Activated CD8-positive, alpha-beta T cell treated with anti-CD3 and anti-CD28 coated beads for 36 hours (primary cell): ENCODE measurements at regions of chr22 and their contacts with region 1.

Region 1: GRCh38 chr22:29625090-29625825 is 21.8 kb downstream of the NF2 start:
- DNase-seq: peak; percentile 69
- ATAC-seq: peak; percentile 61
- H3K4me3 Mint-ChIP-seq: no peak overlapping the region
- H3K27ac Mint-ChIP-seq: peak overlapping the region; percentile 26
- H3K4me1 Mint-ChIP-seq: peaks cover 60% of the 10 kb centered on the region
- H3K27me3 Mint-ChIP-seq: no peaks in the 10 kb centered on the region
- CTCF ChIP-seq: peak; percentile 93

Region 2: DNA sequence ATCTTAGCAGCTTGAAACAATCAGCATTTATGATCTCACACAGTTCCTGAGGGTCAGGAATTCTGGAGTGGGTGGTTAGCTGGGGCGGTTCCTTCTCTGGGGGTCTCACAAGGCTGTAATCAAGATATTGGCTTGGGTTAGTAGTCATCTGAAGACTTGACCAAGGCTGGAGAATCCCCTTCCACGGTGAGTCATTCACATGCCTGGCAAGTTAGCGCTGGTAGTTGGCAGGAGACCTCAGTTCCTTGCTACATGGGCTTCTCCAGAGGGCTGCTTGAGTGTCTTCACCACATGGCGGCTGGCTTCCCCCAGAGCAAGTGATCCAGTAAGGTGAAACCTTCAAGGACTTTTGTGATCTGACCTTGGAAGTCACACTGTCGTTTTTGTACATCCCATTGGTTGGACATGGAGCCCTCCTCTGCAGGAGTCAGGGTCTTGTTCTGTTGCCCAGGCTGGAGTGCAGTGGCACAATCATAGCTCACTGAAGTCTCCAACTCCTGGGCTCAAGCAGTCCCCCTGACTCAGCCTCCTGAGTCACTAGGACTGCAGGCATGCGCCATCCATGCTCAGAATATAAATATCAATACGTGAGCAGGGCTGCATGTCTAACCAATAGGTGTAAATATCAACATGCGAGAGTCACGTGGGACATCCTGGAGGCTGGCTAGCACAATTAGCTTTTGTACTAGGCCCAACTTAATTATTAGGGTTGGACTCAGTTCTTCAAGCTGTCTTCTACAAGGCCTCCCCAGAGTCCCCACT is 37.1 kb before region 1 on chr22:
- CTCF ChIA-PET with region 1: interaction called, 27 read pairs
- POLR2A ChIA-PET with region 1: interaction called, 3 read pairs
- intact Hi-C with region 1: no loop called
- DNase-seq: no peak
- ATAC-seq: no peak
- H3K4me3 Mint-ChIP-seq: no peak overlapping the region
- H3K27ac Mint-ChIP-seq: no peak overlapping the region
- H3K4me1 Mint-ChIP-seq: peaks cover 9% of the 10 kb centered on the region
- H3K27me3 Mint-ChIP-seq: no peaks in the 10 kb centered on the region
- CTCF ChIP-seq: no peak

Region 3: GRCh38 chr22:29610780-29611179 is 14.5 kb before region 1 on chr22:
- CTCF ChIA-PET with region 1: interaction called, 37 read pairs
- POLR2A ChIA-PET with region 1: no interaction called
- intact Hi-C with region 1: no loop called
- DNase-seq: no peak
- ATAC-seq: no peak
- H3K4me3 Mint-ChIP-seq: no peak overlapping the region
- H3K27ac Mint-ChIP-seq: no peak overlapping the region
- H3K4me1 Mint-ChIP-seq: peaks cover 17% of the 10 kb centered on the region
- H3K27me3 Mint-ChIP-seq: no peaks in the 10 kb centered on the region
- CTCF ChIP-seq: no peak

Region 4: DNA sequence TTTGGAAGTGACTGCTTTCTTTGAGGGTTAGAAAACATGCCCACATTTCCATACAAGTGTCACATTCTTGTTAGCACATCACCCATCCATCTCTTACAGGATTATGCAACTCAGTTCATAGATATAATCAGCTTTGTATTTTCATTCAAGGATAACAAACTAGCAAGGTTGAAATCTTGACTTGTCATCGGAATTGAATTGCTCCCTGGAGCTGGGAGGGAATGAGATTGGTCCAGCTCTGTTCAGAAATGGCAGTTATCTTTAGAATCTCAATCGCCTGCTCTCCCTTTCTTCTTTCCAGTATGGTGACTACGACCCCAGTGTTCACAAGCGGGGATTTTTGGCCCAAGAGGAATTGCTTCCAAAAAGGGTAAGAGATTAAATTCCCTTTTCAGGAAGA is 29.1 kb after region 1 on chr22:
- CTCF ChIA-PET with region 1: interaction called, 11 read pairs
- POLR2A ChIA-PET with region 1: no interaction called
- intact Hi-C with region 1: no loop called
- DNase-seq: no peak
- ATAC-seq: no peak
- H3K4me3 Mint-ChIP-seq: no peak overlapping the region
- H3K27ac Mint-ChIP-seq: no peak overlapping the region
- H3K4me1 Mint-ChIP-seq: no peaks in the 10 kb centered on the region
- H3K27me3 Mint-ChIP-seq: no peaks in the 10 kb centered on the region
- CTCF ChIP-seq: no peak

Region 5: DNA sequence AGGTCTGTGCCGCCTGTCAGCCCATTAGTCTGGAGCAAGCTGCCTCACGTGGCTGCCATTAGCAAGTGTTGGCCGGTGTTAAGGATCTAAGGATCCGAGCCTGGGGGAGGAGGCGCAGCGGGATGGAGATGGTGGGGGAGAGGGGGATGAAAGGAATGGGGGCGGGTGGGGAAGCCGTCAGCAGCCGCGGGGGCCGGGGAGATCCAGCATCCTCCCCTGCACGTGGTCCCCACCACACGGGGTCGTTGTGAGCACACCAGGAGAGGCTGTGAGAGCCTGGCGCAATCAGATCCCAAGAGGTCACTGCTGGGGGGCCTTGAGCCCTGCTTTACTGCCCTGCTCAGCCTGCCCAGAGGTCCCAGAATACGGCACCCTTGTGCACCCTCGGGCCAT is 101.9 kb after region 1 on chr22:
- CTCF ChIA-PET with region 1: no interaction called
- POLR2A ChIA-PET with region 1: no interaction called
- intact Hi-C with region 1: no loop called
- DNase-seq: peak; percentile 47
- ATAC-seq: peak; percentile 56
- H3K4me3 Mint-ChIP-seq: no peak overlapping the region
- H3K27ac Mint-ChIP-seq: no peak overlapping the region
- H3K4me1 Mint-ChIP-seq: no peaks in the 10 kb centered on the region
- H3K27me3 Mint-ChIP-seq: peaks cover 2% of the 10 kb centered on the region
- CTCF ChIP-seq: no peak

Region 6: GRCh38 chr22:30079952-30080533 is 454.8 kb after region 1 on chr22 and contains the start of gene HORMAD2:
- CTCF ChIA-PET with region 1: no interaction called
- POLR2A ChIA-PET with region 1: no interaction called
- intact Hi-C with region 1: loop called (anchors 10 kb)
- DNase-seq: no peak
- ATAC-seq: no peak
- H3K4me3 Mint-ChIP-seq: no peak within 1 kb of the TSS
- H3K27ac Mint-ChIP-seq: no peak within 1 kb of the TSS
- H3K4me1 Mint-ChIP-seq: peaks cover 10% of the 10 kb centered on the region
- H3K27me3 Mint-ChIP-seq: peaks cover 12% of the 10 kb centered on the region
- CTCF ChIP-seq: no peak
- total RNA-seq, gene HORMAD2: not detected